ENCODE measurements at regions of chr6 and their contacts with region 1.

Region 1: GRCh38 chr6:42547407-42548329 is 16.2 kb upstream of the UBR2 start:
- DNase-seq: peak; percentile 73 to 94 (median 86)
- ATAC-seq: peak; percentile 100
- H3K4me3 ChIP-seq: peak overlapping the region; percentile 52
- H3K4me3 Mint-ChIP-seq: peak overlapping the region; percentile 23 to 78 (median 68)
- H3K27ac ChIP-seq: peak overlapping the region; percentile 26
- H3K27ac Mint-ChIP-seq: peak overlapping the region in 7 of 9 donors; percentile 42 to 74 (median 48)
- H3K4me1 ChIP-seq: peaks cover 5 to 13% of the 10 kb centered on the region in 2 donors
- H3K4me1 Mint-ChIP-seq: peaks cover 5 to 14% (median 12%) of the 10 kb centered on the region in 7 donors
- H3K27me3 ChIP-seq: no peaks in the 10 kb centered on the region
- H3K27me3 Mint-ChIP-seq: peaks cover 0 to 12% (median 9%) of the 10 kb centered on the region in 5 donors

Region 2: DNA sequence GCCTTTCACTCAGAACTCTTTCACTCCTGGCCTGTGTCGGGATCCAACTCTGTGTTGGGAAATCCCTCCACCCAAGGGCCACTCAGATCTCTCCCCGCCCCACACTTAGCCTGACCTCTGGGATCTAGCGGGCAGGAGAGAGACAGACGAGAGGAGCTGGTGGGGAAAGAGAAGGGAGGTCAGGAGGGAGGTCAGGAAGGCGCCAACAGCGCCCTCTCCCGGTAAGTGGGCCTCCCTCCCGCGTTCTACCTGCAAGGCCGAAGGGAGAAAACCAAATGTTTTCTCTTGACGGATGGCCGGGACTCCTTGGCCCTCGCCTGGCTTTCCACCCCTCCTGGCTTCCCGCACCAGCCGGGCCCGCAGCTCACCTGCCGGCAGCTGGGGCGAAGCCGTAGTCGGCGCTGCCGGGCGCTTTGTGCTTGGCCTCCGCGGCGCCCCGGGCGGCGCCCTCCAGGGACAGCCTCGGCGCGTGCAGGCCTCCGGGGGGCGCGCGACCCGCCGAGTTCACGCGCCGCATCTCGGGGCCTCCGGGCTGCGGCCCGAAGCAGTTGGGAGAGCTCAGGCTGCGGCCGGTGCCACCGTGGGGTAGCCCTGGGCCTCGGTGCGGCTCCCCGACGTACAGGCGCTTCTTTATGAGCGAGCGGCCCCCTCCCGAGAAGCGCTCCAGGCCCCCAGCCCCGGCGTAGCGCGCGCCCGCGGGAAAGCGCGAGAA is 443.4 kb before region 1 on chr6:
- CTCF ChIA-PET with region 1: interaction called, 5 read pairs
- POLR2A ChIA-PET with region 1: no interaction called
- intact Hi-C with region 1: loop called in 1 of 2 experiments (anchors 10 kb)
- DNase-seq: peak; percentile 39 to 79 (median 73)
- ATAC-seq: peak; percentile 90
- H3K4me3 ChIP-seq: peak overlapping the region; percentile 68
- H3K4me3 Mint-ChIP-seq: peak overlapping the region; percentile 66 to 89 (median 70)
- H3K27ac ChIP-seq: peak overlapping the region; percentile 41
- H3K27ac Mint-ChIP-seq: peak overlapping the region in 5 of 9 donors; percentile 20 to 78 (median 58)
- H3K4me1 ChIP-seq: peaks cover 0 to 4% of the 10 kb centered on the region in 2 donors
- H3K4me1 Mint-ChIP-seq: peaks cover 0 to 28% (median 9%) of the 10 kb centered on the region in 7 donors
- H3K27me3 ChIP-seq: no peaks in the 10 kb centered on the region
- H3K27me3 Mint-ChIP-seq: no peaks in the 10 kb centered on the region

Region 3: DNA sequence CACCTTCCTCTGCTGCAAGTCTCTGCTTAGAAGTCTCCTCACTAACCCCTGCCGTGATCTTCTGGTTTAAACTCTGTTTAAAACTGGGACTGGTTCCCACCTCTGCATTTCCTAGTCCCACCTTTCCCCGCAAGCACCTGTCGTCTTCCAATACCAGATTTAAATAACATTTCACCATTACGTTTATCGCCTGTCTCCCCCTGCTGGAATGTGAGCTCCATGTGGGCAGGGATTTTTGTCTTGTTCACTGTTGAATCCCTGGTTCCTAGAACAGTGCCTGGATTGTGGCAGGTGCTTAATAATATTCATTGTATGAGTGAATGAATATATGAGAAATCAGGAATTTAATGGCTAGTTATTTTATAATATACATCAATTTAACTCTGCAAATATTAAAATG is 371.8 kb before region 1 on chr6:
- CTCF ChIA-PET with region 1: no interaction called
- POLR2A ChIA-PET with region 1: no interaction called
- intact Hi-C with region 1: loop called in 1 of 2 experiments (anchors 5 kb)
- DNase-seq: no peak
- ATAC-seq: no peak
- H3K4me3 ChIP-seq: no peak overlapping the region
- H3K4me3 Mint-ChIP-seq: no peak overlapping the region
- H3K27ac ChIP-seq: no peak overlapping the region
- H3K27ac Mint-ChIP-seq: no peak overlapping the region
- H3K4me1 ChIP-seq: no peaks in the 10 kb centered on the region
- H3K4me1 Mint-ChIP-seq: peaks cover 0 to 6% (median 3%) of the 10 kb centered on the region in 7 donors
- H3K27me3 ChIP-seq: no peaks in the 10 kb centered on the region
- H3K27me3 Mint-ChIP-seq: peaks cover 5 to 16% (median 6%) of the 10 kb centered on the region in 5 donors

Region 4: DNA sequence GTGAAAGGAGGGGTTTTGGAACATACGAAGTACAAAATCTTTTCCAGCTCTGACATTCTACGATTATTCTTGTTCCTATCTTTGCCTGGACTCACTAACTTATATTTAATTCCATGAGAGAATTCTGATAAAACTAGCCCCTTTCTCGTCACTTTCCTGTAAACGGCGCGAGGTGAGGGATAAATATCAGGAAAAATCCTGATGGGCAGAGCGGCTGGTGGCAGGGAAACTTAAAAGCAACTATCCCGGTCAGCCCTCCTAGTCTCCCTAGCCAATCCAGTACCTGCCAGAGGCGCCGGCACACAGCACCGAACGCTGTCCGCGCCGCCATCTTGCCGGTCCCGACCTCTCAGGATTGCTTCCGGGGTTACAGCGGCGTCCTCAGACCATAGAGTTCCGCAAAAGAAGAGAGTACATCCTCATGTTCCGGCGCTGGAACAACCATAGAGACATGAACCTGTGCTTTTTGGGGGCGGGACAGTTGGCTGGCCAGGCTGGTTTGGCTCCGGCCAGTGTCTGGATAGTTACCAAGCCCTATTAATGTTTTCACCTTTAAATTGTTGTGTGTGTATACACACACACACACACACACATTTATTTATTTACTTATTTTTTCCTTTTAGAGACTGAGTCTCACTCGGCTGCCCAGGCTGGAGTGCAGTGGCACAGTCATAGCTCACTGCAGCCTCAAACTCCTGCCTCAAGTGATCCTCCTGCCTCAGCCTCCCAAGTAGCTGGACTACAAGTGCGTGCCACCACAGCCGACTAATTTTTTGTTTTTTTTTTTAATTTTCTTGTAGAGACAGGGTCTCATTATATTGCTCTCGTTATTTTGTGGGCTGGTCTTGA is 329.9 kb before region 1 on chr6 and contains the start of gene MRPS10:
- CTCF ChIA-PET with region 1: interaction called, 16 read pairs
- POLR2A ChIA-PET with region 1: interaction called, 5 read pairs
- intact Hi-C with region 1: loop called (anchors 1 to 5 kb)
- DNase-seq: peak; percentile 72 to 92 (median 87)
- ATAC-seq: peak; percentile 100
- H3K4me3 ChIP-seq: peak within 1 kb of the TSS; percentile 96
- H3K4me3 Mint-ChIP-seq: peak within 1 kb of the TSS; percentile 92 to 100 (median 98)
- H3K27ac ChIP-seq: peak within 1 kb of the TSS; percentile 77
- H3K27ac Mint-ChIP-seq: peak within 1 kb of the TSS; percentile 87 to 99 (median 97)
- H3K4me1 ChIP-seq: peaks cover 9 to 14% of the 10 kb centered on the region in 2 donors
- H3K4me1 Mint-ChIP-seq: peaks cover 7 to 34% (median 24%) of the 10 kb centered on the region in 7 donors
- H3K27me3 ChIP-seq: no peaks in the 10 kb centered on the region
- H3K27me3 Mint-ChIP-seq: no peaks in the 10 kb centered on the region
- total RNA-seq, gene MRPS10: 17.0 to 30.3 (median 25.3) TPM

Region 5: GRCh38 chr6:42294759-42295158 is 252.9 kb before region 1 on chr6:
- CTCF ChIA-PET with region 1: interaction called, 11 read pairs
- POLR2A ChIA-PET with region 1: no interaction called
- intact Hi-C with region 1: no loop called
- DNase-seq: no peak
- ATAC-seq: peak; percentile 66
- H3K4me3 ChIP-seq: no peak overlapping the region
- H3K4me3 Mint-ChIP-seq: peak overlapping the region in 6 of 10 donors; percentile 1 to 69 (median 25)
- H3K27ac ChIP-seq: no peak overlapping the region
- H3K27ac Mint-ChIP-seq: peak overlapping the region in 5 of 9 donors; percentile 10 to 76 (median 67)
- H3K4me1 ChIP-seq: peaks cover 8 to 48% of the 10 kb centered on the region in 2 donors
- H3K4me1 Mint-ChIP-seq: peaks cover 30 to 69% (median 54%) of the 10 kb centered on the region in 7 donors
- H3K27me3 ChIP-seq: no peaks in the 10 kb centered on the region
- H3K27me3 Mint-ChIP-seq: no peaks in the 10 kb centered on the region

Region 6: GRCh38 chr6:42390228-42390934 is 157.3 kb before region 1 on chr6:
- CTCF ChIA-PET with region 1: interaction called, 16 read pairs
- POLR2A ChIA-PET with region 1: interaction called, 9 read pairs
- intact Hi-C with region 1: no loop called
- DNase-seq: peak in 8 of 9 donors; percentile 69 to 90 (median 82)
- ATAC-seq: peak; percentile 88
- H3K4me3 ChIP-seq: peak overlapping the region; percentile 50
- H3K4me3 Mint-ChIP-seq: peak overlapping the region; percentile 71 to 87 (median 84)
- H3K27ac ChIP-seq: peak overlapping the region; percentile 85
- H3K27ac Mint-ChIP-seq: peak overlapping the region; percentile 97 to 100 (median 99)
- H3K4me1 ChIP-seq: peaks cover 89% of the 10 kb centered on the region in 2 donors
- H3K4me1 Mint-ChIP-seq: peaks cover 75 to 100% (median 96%) of the 10 kb centered on the region in 7 donors
- H3K27me3 ChIP-seq: no peaks in the 10 kb centered on the region
- H3K27me3 Mint-ChIP-seq: no peaks in the 10 kb centered on the region

Region 7: DNA sequence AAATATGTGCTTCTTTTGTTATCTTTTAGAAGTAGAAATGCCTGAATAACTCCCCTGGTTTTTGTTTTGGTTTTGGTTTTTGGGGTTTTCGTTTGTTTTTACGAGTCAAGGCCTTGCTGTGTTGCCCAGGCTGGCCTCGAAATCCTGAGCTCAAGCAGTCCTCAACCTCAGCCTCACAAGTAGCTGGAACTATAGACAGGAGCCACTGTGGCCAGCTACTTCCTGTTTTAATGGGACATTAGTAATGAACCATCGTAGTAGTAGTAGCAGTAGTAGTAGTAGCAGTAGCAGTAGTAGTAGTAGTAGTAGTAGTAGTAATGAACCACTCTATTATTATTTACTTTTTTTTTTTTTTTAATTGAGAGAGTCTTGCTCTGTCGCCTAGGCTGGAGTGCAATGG is 82.2 kb after region 1 on chr6:
- CTCF ChIA-PET with region 1: no interaction called
- POLR2A ChIA-PET with region 1: no interaction called
- intact Hi-C with region 1: no loop called
- DNase-seq: no peak
- ATAC-seq: no peak
- H3K4me3 ChIP-seq: no peak overlapping the region
- H3K4me3 Mint-ChIP-seq: no peak overlapping the region
- H3K27ac ChIP-seq: no peak overlapping the region
- H3K27ac Mint-ChIP-seq: peak overlapping the region in 3 of 9 donors; percentile 16 to 67 (median 47)
- H3K4me1 ChIP-seq: no peaks in the 10 kb centered on the region
- H3K4me1 Mint-ChIP-seq: peaks cover 0 to 18% (median 10%) of the 10 kb centered on the region in 7 donors
- H3K27me3 ChIP-seq: no peaks in the 10 kb centered on the region
- H3K27me3 Mint-ChIP-seq: no peaks in the 10 kb centered on the region

Region 8: DNA sequence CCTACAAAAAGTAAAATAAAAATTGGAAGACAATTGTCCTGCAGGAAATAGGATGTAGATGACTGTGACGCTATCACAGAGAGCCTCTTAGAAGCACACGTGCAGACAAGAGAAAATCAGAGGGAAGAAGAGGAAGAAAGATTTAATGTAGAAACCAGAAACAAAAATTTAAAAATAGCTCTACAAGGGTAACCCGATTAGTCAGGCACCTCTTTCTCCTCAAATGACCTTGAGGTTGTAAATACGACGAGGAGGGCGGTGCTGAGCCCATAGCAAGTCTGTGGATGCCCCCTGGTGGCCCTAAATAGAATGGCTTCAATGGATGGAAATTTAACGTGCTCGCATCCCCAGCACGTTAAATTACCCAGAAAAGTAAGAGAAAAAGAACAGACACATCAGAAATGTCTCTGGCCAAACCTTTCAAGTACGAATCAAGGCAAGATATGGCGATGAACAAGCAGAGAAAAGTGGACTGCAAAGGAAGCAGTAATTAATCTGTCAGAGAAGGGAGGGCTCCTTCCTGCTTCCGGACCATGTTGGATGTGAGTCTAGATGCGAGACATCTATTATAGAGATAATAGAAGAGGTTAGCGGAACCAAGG is 178.9 kb after region 1 on chr6:
- CTCF ChIA-PET with region 1: no interaction called
- POLR2A ChIA-PET with region 1: no interaction called
- intact Hi-C with region 1: no loop called
- DNase-seq: peak; percentile 20 to 87 (median 80)
- ATAC-seq: peak; percentile 99
- H3K4me3 ChIP-seq: peak overlapping the region; percentile 84
- H3K4me3 Mint-ChIP-seq: peak overlapping the region; percentile 76 to 96 (median 90)
- H3K27ac ChIP-seq: peak overlapping the region; percentile 74
- H3K27ac Mint-ChIP-seq: peak overlapping the region; percentile 89 to 99 (median 98)
- H3K4me1 ChIP-seq: peaks cover 6 to 14% of the 10 kb centered on the region in 2 donors
- H3K4me1 Mint-ChIP-seq: peaks cover 9 to 25% (median 20%) of the 10 kb centered on the region in 7 donors
- H3K27me3 ChIP-seq: no peaks in the 10 kb centered on the region
- H3K27me3 Mint-ChIP-seq: peaks cover 0 to 1% (median 0%) of the 10 kb centered on the region in 5 donors

Region 9: DNA sequence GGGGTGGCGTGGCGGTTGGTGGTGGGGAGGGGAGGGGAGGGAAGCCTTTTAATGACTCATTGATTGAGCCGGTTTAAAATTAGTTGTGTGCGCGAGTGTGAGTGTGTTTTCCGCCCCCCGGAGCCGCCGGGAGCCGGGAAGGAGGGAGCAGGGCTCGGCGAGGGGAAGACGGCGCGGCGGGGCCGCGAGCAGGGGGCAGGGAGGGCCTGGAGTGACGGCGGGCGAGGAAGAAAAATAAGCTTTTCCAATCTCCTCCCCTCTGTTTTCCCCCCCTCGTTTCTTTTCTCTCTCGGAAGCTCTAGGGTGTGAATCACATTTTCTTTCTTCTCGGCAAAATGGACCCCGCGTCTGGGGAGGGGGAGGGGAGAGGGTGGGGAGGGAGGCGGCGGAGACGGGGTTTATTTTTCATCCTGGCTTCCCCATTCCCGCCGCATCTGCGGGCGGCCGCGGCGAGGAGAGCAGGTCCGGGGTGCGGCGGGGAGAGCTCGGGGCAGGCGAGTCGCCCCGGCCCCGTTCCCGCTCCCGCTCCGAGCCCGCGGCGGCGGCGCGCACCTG is 235.0 kb after region 1 on chr6:
- CTCF ChIA-PET with region 1: no interaction called
- POLR2A ChIA-PET with region 1: no interaction called
- intact Hi-C with region 1: no loop called
- DNase-seq: peak in 8 of 9 donors; percentile 65 to 88 (median 82)
- ATAC-seq: peak; percentile 75
- H3K4me3 ChIP-seq: peak overlapping the region; percentile 89
- H3K4me3 Mint-ChIP-seq: peak overlapping the region in 8 of 10 donors; percentile 89 to 100 (median 98)
- H3K27ac ChIP-seq: peak overlapping the region; percentile 100
- H3K27ac Mint-ChIP-seq: peak overlapping the region in 5 of 9 donors; percentile 99 to 100 (median 100)
- H3K4me1 ChIP-seq: peaks cover 36 to 45% of the 10 kb centered on the region in 2 donors
- H3K4me1 Mint-ChIP-seq: peaks cover under 1 to 35% (median 30%) of the 10 kb centered on the region in 7 donors
- H3K27me3 ChIP-seq: no peaks in the 10 kb centered on the region
- H3K27me3 Mint-ChIP-seq: no peaks in the 10 kb centered on the region

Measured in naive thymus-derived CD4-positive, alpha-beta T cell (primary cell).